MCF 10A (cell line): ENCODE measurements at regions of chr10 and their contacts with region 1.

Region 1: GRCh38 chr10:90857635-90858460 is at the start of gene HTR7:
- DNase-seq: peak; percentile 46
- H3K4me3 Mint-ChIP-seq: peak within 1 kb of the TSS; percentile 89
- H3K27ac Mint-ChIP-seq: peak within 1 kb of the TSS; percentile 84
- H3K4me1 Mint-ChIP-seq: peaks cover 17% of the 10 kb centered on the region
- H3K27me3 Mint-ChIP-seq: no peaks in the 10 kb centered on the region
- CTCF ChIP-seq: peak; percentile 66
- total RNA-seq, gene HTR7: 14.1 and 15.3 TPM in 2 replicates

Region 2: DNA sequence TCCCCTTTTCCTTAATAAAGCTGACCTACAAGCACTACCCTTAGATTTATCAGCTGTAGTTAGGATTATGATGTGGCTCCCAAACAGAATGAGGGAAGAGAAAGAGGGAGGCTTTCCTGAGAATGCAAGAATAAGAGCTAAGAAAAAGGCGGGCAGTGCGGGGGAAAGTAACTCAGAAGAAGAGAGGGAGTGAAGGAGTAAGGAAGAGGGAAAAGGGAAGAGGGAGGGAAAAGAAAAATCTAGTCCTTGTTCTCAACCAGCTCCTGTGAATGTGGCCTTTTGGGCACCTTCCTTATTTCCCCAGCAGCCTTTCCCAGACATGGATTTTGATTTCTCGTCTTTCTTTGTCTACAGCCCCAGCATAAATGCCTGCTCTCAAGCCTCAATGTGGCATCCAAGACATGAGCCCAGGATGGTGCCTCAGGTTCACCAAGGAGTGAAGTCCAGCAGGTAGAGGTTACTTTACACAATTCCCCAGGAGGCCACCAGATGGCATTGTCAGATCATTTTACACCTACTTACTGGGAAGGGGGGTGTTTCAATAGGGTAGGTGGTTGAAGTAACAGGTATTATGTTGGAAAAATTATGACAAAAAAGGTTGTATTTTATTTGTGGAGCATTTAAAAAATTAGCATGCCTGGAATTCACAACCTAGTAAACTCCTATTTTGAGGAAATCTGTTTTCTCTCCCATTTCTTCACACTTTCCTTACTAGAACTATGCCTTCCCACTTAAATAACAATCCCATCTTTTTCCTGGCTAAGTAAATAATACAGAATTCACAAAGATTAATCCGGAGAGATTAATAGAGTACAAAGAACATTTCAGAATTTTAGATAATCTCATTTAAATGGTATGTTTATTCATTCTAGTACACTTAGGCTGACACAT is 106.5 kb before region 1 on chr10:
- CTCF ChIA-PET with region 1: interaction called, 149 read pairs
- POLR2A ChIA-PET with region 1: interaction called, 54 read pairs
- intact Hi-C with region 1: loop called (anchors 1 kb)
- DNase-seq: peak; percentile 71
- H3K4me3 Mint-ChIP-seq: no peak overlapping the region
- H3K27ac Mint-ChIP-seq: no peak overlapping the region
- H3K4me1 Mint-ChIP-seq: peaks cover 16% of the 10 kb centered on the region
- H3K27me3 Mint-ChIP-seq: no peaks in the 10 kb centered on the region
- CTCF ChIP-seq: peak; percentile 91

Region 3: DNA sequence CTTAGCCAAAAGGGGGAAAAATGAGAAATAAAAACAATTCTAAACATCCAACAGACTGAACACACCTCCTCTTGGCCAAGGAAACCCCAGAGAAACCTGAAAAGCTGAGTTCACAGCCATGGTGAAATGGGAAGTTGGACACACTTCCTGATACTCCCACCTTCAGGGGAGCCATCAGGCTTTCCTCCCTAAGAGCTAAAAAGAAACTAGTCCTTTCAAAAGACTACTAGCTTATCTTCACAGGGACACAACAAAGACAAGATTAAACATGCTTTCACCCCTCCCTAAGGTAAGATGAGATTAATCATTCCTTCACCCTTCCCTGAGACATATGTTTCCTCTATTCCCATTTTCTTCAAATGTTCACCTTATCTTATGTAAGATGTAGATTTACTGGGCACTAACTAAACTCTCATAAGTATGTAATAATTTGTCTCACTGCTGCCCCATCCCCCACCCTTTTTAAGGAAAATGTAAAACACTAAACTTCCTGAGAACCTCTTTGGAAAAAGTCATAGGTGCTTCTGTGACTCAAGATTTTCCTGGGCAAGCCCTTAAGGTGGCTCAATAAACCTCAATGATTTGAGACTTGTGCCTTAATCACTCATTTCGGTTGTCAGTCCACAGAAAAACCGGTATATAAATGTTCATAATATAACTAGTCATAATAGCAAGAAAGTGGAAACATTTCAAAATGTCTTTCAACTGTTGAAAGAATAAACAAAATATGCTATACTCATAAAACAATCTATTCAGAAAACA is 40.5 kb before region 1 on chr10:
- CTCF ChIA-PET with region 1: interaction called, 6 read pairs
- POLR2A ChIA-PET with region 1: interaction called, 26 read pairs
- intact Hi-C with region 1: loop called (anchors 2 kb)
- DNase-seq: peak; percentile 41
- H3K4me3 Mint-ChIP-seq: peak overlapping the region; percentile 0
- H3K27ac Mint-ChIP-seq: peak overlapping the region; percentile 59
- H3K4me1 Mint-ChIP-seq: peaks cover 28% of the 10 kb centered on the region
- H3K27me3 Mint-ChIP-seq: no peaks in the 10 kb centered on the region
- CTCF ChIP-seq: no peak

Region 4: GRCh38 chr10:90847417-90847816 is 10.4 kb before region 1 on chr10:
- CTCF ChIA-PET with region 1: interaction called, 4 read pairs
- POLR2A ChIA-PET with region 1: interaction called, 67 read pairs
- intact Hi-C with region 1: no loop called
- DNase-seq: peak; percentile 82
- H3K4me3 Mint-ChIP-seq: peak overlapping the region; percentile 33
- H3K27ac Mint-ChIP-seq: peak overlapping the region; percentile 80
- H3K4me1 Mint-ChIP-seq: peaks cover 35% of the 10 kb centered on the region
- H3K27me3 Mint-ChIP-seq: no peaks in the 10 kb centered on the region
- CTCF ChIP-seq: no peak

Region 5: DNA sequence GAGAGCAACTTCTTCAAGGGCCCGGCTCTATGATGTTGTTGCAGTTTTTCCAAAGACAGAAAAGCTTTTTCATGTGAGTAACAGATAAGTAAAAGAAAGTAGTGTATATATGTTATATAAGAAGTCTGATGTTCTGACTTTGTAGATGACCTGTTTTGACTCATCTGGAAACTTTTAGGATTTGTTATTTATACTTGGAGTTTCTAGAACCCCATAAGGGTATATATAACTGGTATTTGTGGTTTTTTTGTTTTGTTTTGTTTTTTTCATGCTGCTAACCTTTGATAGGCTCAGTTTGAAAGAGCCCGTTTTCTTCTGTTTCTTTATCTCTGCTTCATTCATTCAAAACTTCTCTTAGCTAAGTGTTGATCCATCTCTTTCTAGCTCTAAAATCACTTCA is 21.2 kb after region 1 on chr10:
- CTCF ChIA-PET with region 1: no interaction called
- POLR2A ChIA-PET with region 1: no interaction called
- intact Hi-C with region 1: no loop called
- DNase-seq: no peak
- H3K4me3 Mint-ChIP-seq: no peak overlapping the region
- H3K27ac Mint-ChIP-seq: no peak overlapping the region
- H3K4me1 Mint-ChIP-seq: peaks cover 4% of the 10 kb centered on the region
- H3K27me3 Mint-ChIP-seq: no peaks in the 10 kb centered on the region
- CTCF ChIP-seq: no peak

Region 6: DNA sequence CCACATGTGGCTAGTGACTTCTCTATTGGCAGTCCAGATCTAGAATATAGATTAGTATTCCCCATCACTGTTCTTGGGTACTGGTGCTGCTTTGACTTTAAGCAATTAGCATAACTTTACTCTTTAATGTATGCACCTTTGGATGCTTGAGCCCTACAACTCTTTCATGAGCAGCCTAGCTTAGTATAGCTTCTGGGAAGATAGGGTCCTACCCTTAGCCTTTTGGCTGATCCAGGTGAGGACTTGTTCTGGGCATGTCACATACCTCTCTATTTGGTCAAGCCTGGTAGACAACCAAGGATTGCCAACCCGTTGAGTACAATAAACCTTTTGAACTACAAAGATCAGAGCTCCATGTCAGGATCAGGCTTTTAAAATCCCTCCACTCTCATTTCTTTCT is 380.3 kb after region 1 on chr10:
- CTCF ChIA-PET with region 1: no interaction called
- POLR2A ChIA-PET with region 1: no interaction called
- intact Hi-C with region 1: no loop called
- DNase-seq: no peak
- H3K4me3 Mint-ChIP-seq: no peak overlapping the region
- H3K27ac Mint-ChIP-seq: no peak overlapping the region
- H3K4me1 Mint-ChIP-seq: no peaks in the 10 kb centered on the region
- H3K27me3 Mint-ChIP-seq: no peaks in the 10 kb centered on the region
- CTCF ChIP-seq: no peak